ENCODE measurements at regions of chr2 and their contacts with region 1.

Region 1: GRCh38 chr2:68121873-68122679 is 35.6 kb upstream of the PNO1 start:
- DNase-seq: peak; percentile 57 to 70 (median 70)
- H3K4me3 ChIP-seq: peak overlapping the region in 1 of 3 experiments; percentile 5
- H3K4me3 Mint-ChIP-seq: peak overlapping the region in 1 of 2 donors; percentile 51
- H3K27ac ChIP-seq: no peak overlapping the region
- H3K27ac Mint-ChIP-seq: peak overlapping the region in 3 of 7 donors; percentile 2 to 68 (median 17)
- H3K4me1 ChIP-seq: peaks cover 2 to 6% of the 10 kb centered on the region in 2 donors
- H3K4me1 Mint-ChIP-seq: peaks cover 34% of the 10 kb centered on the region
- H3K27me3 ChIP-seq: no peaks in the 10 kb centered on the region
- H3K27me3 Mint-ChIP-seq: peaks cover 0 to 6% (median 0%) of the 10 kb centered on the region in 3 donors
- CTCF ChIP-seq: peak; percentile 98

Region 2: DNA sequence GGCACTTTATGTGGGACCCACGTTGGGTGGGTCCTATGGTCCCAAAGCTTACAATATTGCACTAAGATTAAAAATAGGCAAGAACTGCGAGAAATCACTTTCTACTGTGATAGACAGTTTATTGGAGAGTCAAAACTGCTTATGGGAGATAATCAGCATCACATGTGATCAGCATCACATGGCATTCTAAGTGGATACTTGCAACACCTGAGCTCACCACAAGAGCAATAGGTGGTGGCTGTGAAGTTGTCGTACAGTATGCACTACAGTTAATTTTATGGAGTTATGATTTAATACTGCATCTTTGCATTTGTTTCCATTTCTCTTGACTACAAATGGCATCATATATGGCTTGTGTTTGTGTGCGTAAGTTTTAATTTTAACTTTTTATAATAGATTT is 47.2 kb after region 1 on chr2:
- intact Hi-C with region 1: no loop called
- DNase-seq: no peak
- H3K4me3 ChIP-seq: no peak overlapping the region
- H3K4me3 Mint-ChIP-seq: no peak overlapping the region
- H3K27ac ChIP-seq: no peak overlapping the region
- H3K27ac Mint-ChIP-seq: no peak overlapping the region
- H3K4me1 ChIP-seq: peaks cover 29 to 30% of the 10 kb centered on the region in 2 donors
- H3K4me1 Mint-ChIP-seq: peaks cover 23% of the 10 kb centered on the region
- H3K27me3 ChIP-seq: no peaks in the 10 kb centered on the region
- H3K27me3 Mint-ChIP-seq: no peaks in the 10 kb centered on the region
- CTCF ChIP-seq: no peak

Region 3: GRCh38 chr2:68185541-68186164 is 63.6 kb after region 1 on chr2:
- intact Hi-C with region 1: loop called (anchors 5 to 10 kb)
- DNase-seq: peak; percentile 63 to 75 (median 72)
- H3K4me3 ChIP-seq: no peak overlapping the region
- H3K4me3 Mint-ChIP-seq: no peak overlapping the region
- H3K27ac ChIP-seq: no peak overlapping the region
- H3K27ac Mint-ChIP-seq: peak overlapping the region in 4 of 7 donors; percentile 42 to 75 (median 45)
- H3K4me1 ChIP-seq: no peaks in the 10 kb centered on the region
- H3K4me1 Mint-ChIP-seq: peaks cover 8% of the 10 kb centered on the region
- H3K27me3 ChIP-seq: no peaks in the 10 kb centered on the region
- H3K27me3 Mint-ChIP-seq: no peaks in the 10 kb centered on the region
- CTCF ChIP-seq: peak; percentile 92

Region 4: DNA sequence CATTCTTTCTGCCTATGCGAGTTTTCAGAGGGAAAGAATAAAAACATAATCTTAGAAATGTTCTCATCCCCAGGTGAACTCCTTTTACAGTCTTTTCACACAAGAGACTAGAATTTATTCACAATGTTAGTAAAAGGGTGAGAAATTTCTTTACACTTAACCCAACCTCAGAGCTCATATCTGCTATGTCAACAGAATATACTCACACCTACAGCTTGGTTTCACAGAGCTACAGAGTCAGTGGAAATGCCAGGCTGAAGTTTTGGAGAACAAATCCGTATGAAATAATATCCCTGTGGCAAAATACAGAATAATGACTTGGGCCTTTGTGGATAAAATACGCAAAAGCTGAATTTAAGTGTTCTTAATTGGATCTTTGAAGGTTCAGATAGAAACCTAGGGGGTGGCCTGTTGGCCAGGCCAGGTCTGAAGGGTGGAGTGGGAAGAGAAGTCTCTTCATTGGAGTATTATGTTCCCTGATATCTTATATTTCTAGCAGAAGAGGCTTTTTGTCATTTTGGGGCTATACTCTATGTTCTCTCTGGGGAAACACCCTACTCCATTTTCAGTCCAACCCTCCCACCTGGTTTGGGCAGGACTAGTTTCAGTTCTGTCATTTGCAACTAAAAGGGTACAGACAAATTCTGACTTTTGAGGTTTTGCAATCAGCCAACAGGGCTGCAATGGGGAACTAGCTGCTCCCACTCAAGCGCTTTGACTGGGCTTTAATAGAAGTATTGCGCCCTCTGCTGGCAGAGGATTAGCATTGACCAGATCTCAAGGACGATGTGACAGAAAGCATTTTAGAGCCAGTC is 319.3 kb after region 1 on chr2:
- intact Hi-C with region 1: loop called in 1 of 2 experiments (anchors 5 kb)
- DNase-seq: peak; percentile 93 to 99 (median 97)
- H3K4me3 ChIP-seq: peak overlapping the region in 1 of 3 experiments; percentile 28
- H3K4me3 Mint-ChIP-seq: peak overlapping the region in 1 of 2 donors; percentile 26
- H3K27ac ChIP-seq: peak overlapping the region; percentile 39 to 69
- H3K27ac Mint-ChIP-seq: peak overlapping the region; percentile 85 to 95 (median 93)
- H3K4me1 ChIP-seq: peaks cover 25 to 26% of the 10 kb centered on the region in 2 donors
- H3K4me1 Mint-ChIP-seq: peaks cover 30% of the 10 kb centered on the region
- H3K27me3 ChIP-seq: no peaks in the 10 kb centered on the region
- H3K27me3 Mint-ChIP-seq: no peaks in the 10 kb centered on the region
- CTCF ChIP-seq: peak; percentile 90

Measured in CD14-positive monocyte (primary cell).